Heart right ventricle (tissue), 16 donors: ENCODE measurements at regions of chr1 and their contacts with region 1.

Region 1: DNA sequence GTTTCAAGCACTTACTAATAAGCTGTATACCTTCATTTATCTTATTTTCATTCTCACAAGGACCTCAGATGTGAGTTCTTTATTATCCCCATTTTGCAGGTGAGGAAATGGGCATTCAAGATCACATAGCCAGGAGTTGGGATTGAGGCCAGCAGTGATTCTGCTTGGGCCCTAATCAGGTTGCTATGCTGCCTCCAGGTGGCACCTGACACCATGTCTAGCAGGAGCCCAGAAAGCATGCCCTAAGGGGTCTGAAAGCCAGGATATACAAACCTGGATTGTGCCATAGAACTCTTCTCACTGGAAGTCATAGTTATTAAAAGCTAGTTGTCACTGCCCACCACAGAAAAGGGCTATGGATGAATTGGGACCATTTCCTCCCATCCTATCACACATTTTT is 61.1 kb downstream of the FYB2 start:
- DNase-seq: peak; percentile 5 to 14
- ATAC-seq: peak in 5 of 8 donors; percentile 38 to 74 (median 67)
- H3K4me3 ChIP-seq: no peak overlapping the region
- H3K27ac ChIP-seq: no peak overlapping the region
- H3K4me1 ChIP-seq: peaks cover 0 to 5% (median 0%) of the 10 kb centered on the region in 9 donors
- H3K27me3 ChIP-seq: peaks cover 0 to 4% (median 0%) of the 10 kb centered on the region in 7 donors
- CTCF ChIP-seq: peak in 6 of 9 donors; percentile 10 to 50 (median 40)

Region 2: GRCh38 chr1:57418971-57419370 is 660.8 kb after region 1 on chr1:
- intact Hi-C with region 1: loop called in 1 of 10 experiments (anchors 5 kb)
- DNase-seq: no peak
- ATAC-seq: no peak
- H3K4me3 ChIP-seq: no peak overlapping the region
- H3K27ac ChIP-seq: no peak overlapping the region
- H3K4me1 ChIP-seq: peaks cover 0 to 24% (median 10%) of the 10 kb centered on the region in 9 donors
- H3K27me3 ChIP-seq: peaks cover 0 to 57% (median 50%) of the 10 kb centered on the region in 7 donors
- CTCF ChIP-seq: no peak